ENCODE measurements at regions of chr13 and their contacts with region 1.

Region 1: DNA sequence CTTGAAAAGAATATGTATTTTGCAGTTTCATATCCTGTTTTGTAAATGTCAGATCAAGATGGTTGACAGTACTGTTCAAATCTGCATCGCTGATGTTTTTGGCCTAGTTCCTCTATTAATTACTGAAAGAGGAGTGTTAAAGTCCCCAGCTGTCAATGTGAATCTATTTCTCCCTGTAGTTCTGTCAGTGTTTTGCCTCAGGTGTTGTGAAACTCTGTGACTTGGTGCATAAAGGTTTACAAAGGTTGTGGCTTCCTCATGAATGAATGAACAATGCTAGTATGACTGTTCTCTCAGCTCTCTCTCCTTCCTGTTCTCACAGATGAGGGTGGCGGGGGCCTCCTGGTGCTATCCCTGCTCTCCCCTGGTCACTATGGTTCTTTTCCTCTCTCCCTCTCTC is 142.4 kb downstream of the MYCBP2 start:
- DNase-seq: no peak
- H3K4me3 ChIP-seq: no peak overlapping the region
- H3K27ac ChIP-seq: no peak overlapping the region
- H3K4me1 ChIP-seq: no peaks in the 10 kb centered on the region
- H3K27me3 ChIP-seq: no peaks in the 10 kb centered on the region
- CTCF ChIP-seq: no peak
- POLR2A ChIP-seq: no peak

Region 2: DNA sequence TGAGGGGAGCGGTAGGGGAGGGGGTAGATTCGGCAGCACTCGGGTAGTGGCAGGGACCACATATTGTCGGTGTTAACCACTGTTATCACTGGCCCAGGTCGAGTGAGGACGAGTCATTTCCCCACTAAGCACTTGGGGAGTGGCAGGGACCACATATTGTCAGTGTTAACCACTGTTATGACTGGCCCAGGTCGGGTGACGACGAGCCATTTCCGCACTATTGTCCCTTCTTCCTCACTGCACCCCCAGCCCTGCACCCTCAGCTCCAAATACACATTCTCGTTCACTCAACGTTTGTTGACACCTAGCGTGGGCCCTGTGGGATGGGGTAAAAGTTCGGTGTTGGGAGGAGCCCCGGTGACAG is 193.0 kb before region 1 on chr13:
- intact Hi-C with region 1: no loop called
- DNase-seq: no peak
- H3K4me3 ChIP-seq: peak overlapping the region; percentile 63 to 92
- H3K27ac ChIP-seq: peak overlapping the region; percentile 85 to 91
- H3K4me1 ChIP-seq: no peaks in the 10 kb centered on the region
- H3K27me3 ChIP-seq: peaks cover 1% of the 10 kb centered on the region
- CTCF ChIP-seq: no peak
- POLR2A ChIP-seq: no peak

Region 3: DNA sequence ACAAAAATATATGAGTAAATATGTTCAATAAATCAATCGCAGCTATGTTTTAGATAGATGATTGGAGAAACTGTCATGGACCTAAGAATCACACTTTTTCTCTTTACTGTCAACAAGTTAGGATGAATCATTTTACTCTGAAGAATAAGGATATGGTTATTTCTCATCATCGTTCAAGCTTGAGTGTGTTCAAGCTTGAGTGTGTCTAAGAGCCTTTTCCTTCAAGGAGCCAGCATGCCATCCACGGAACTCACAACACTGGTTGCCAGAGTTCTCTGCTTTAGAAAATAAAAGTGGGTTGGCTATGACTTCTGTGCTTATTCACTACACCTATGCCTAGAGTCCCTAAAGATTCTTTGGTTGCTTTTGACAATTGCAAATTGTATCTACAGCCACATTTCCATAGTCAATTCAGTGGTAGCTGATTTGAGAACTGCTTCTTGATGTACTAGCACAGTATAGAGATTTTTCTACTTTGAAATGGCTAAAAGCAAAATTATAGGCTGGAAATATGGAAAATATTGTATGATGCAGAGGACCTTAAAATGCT is 292.9 kb after region 1 on chr13:
- intact Hi-C with region 1: loop called (anchors 10 kb)
- DNase-seq: no peak
- H3K4me3 ChIP-seq: no peak overlapping the region
- H3K27ac ChIP-seq: no peak overlapping the region
- H3K4me1 ChIP-seq: no peaks in the 10 kb centered on the region
- H3K27me3 ChIP-seq: no peaks in the 10 kb centered on the region
- CTCF ChIP-seq: no peak
- POLR2A ChIP-seq: no peak

Measured in prostate gland (tissue), 2 donors.